ENCODE measurements at regions of chrX and their contacts with region 1.

Region 1: GRCh38 chrX:134520860-134521390 is 61.0 kb downstream of the HPRT1 start:
- DNase-seq: peak in 2 of 9 experiments; percentile 13 to 29
- ATAC-seq: no peak
- H3K4me3 ChIP-seq: no peak overlapping the region
- H3K4me3 Mint-ChIP-seq: no peak overlapping the region
- H3K27ac ChIP-seq: no peak overlapping the region
- H3K27ac Mint-ChIP-seq: no peak overlapping the region
- H3K4me1 ChIP-seq: no peaks in the 10 kb centered on the region
- H3K4me1 Mint-ChIP-seq: peaks cover 5% of the 10 kb centered on the region
- H3K27me3 ChIP-seq: no peaks in the 10 kb centered on the region
- H3K27me3 Mint-ChIP-seq: no peaks in the 10 kb centered on the region
- CTCF ChIP-seq: no peak

Region 2: DNA sequence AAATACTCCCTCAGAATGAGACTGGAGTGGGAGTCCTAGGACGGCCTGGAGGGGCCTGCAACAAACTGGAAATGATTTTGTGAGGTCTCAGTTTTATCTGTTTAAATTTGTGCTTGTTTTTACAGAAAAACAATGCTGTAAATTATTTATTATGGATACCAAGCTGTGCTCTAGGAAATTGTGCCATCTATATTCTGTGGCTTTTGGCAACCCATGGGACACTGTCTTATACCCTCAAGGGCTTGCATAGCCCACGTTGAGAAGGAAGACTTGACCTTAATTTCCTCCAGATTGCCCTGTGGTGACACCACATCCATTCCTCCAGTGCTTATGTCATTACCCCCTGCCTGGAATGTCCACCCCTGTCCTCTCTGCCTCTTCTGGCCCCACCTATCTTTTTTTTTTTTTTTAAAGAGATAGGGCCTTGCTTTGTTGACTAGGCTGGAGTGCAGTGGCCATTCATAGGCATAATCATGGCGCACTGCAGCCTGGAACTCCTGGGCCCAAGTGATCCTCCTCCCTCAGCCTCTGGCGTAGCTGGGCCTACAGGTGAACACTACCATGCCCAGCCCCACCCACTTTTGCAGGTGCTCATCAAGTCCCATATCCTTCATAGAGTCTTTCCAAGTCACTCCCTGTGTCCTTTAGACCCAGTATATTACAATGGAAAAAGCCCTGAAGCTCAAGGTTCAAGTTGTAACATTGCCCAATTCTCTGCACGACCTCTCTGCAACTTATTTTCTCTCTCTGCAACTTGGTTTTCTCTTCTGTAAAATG is 16.4 kb after region 1 on chrX:
- CTCF ChIA-PET with region 1: no interaction called
- POLR2A ChIA-PET with region 1: no interaction called
- intact Hi-C with region 1: no loop called
- DNase-seq: no peak
- ATAC-seq: no peak
- H3K4me3 ChIP-seq: no peak overlapping the region
- H3K4me3 Mint-ChIP-seq: no peak overlapping the region
- H3K27ac ChIP-seq: no peak overlapping the region
- H3K27ac Mint-ChIP-seq: no peak overlapping the region
- H3K4me1 ChIP-seq: no peaks in the 10 kb centered on the region
- H3K4me1 Mint-ChIP-seq: peaks cover 1% of the 10 kb centered on the region
- H3K27me3 ChIP-seq: no peaks in the 10 kb centered on the region
- H3K27me3 Mint-ChIP-seq: no peaks in the 10 kb centered on the region
- CTCF ChIP-seq: no peak

Region 3: DNA sequence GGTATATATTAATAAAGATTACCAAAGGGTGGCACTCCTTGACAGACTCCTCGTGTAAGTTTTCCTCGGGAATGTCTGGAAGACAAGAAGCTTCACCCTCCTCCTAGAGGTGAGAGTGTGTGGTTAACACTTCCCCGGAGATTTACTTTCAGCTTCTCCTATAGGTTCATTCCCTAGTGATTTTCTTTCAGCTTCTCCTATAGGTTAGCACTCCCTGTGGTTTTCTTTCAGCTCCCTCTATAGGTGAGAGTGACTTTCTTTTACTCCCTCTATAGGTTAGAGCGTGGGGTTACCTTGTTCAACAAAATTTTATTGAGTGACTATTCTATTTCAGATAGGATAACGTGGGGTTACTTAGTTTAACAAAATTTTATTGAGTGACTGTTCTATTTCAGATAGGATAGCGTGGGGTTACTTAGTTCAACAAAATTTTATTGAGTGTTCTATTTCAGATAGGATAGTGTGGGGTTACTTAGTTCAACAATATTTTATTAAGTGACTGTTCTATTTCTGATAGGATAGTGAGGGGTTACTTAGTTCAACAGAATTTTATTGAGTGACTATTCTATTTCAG is 243.4 kb after region 1 on chrX:
- CTCF ChIA-PET with region 1: no interaction called
- POLR2A ChIA-PET with region 1: no interaction called
- intact Hi-C with region 1: loop called in 1 of 2 experiments (anchors 5 kb)
- DNase-seq: peak in 2 of 9 experiments; percentile 27 to 41
- ATAC-seq: peak; percentile 75
- H3K4me3 ChIP-seq: no peak overlapping the region
- H3K4me3 Mint-ChIP-seq: no peak overlapping the region
- H3K27ac ChIP-seq: no peak overlapping the region
- H3K27ac Mint-ChIP-seq: no peak overlapping the region
- H3K4me1 ChIP-seq: no peaks in the 10 kb centered on the region
- H3K4me1 Mint-ChIP-seq: no peaks in the 10 kb centered on the region
- H3K27me3 ChIP-seq: no peaks in the 10 kb centered on the region
- H3K27me3 Mint-ChIP-seq: no peaks in the 10 kb centered on the region
- CTCF ChIP-seq: no peak

Measured in CD8-positive, alpha-beta T cell (primary cell).